GM12878 (cell line): ENCODE measurements at regions of chr2 and their contacts with region 1.

Region 1: GRCh38 chr2:64750817-64751285 is 97.1 kb upstream of the SERTAD2 start:
- DNase-seq: peak; percentile 99
- ATAC-seq: peak; percentile 89
- H3K4me3 ChIP-seq: peak overlapping the region; percentile 98
- H3K27ac ChIP-seq: peak overlapping the region; percentile 92
- H3K4me1 ChIP-seq: 0 out of 2 replicates have a peak, but pooled peaks cover 3% of the 10 kb centered on the region
- H3K27me3 ChIP-seq: no peaks in the 10 kb centered on the region
- CTCF ChIP-seq: no peak; a peak in 2 of 6 replicates
- EP300 ChIP-seq: no peak; a peak in 1 of 4 replicates
- POLR2A ChIP-seq: peak; percentile 92
- RAD21 ChIP-seq: peak; percentile 31; the same call in 1 of the 2 replicates

Region 2: DNA sequence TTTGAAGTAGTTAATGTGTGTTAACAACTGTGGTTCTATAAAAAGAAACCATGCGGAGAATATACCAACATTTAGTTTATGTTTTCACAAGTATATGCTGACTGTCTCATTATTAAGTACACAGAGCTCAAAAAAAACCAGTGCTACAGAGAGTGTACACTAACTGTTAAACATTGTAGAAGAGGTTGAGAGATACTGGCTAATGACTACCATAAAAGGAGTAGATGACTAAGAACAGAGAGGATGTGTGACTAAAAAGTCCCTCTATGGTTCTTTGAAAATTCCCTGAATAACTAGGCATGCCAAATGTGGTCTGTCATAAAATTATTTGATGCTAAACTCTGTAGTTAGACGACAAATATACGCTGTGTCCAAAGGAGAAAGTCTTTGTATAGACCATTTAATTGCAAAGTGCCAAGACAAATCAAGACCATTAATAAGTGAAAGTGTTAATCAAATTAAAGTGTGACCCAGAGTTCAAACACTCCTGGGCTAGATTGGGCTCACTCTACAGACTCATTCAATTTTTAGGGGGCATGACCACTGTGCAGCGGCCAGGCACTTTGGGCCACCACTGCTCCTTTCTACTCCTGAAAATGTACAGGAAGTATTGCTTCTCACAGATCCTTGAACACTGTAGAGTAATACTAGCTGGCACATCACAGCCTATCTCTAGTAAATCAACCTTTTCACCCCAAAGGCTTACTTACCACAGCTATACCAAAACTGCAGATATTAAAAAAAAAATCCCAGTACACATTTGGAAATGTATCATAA is 52.0 kb before region 1 on chr2:
- CTCF ChIA-PET with region 1: interaction called, 4 read pairs
- POLR2A ChIA-PET with region 1: interaction called, 43 read pairs
- RAD21 ChIA-PET with region 1: interaction called, 44 read pairs
- SMC1A ChIA-PET with region 1: interaction called, 38 read pairs
- in situ Hi-C with region 1: no loop called
- intact Hi-C with region 1: loop called (anchors 2 kb)
- DNase-seq: peak; percentile 83
- ATAC-seq: peak; percentile 90
- H3K4me3 ChIP-seq: no peak overlapping the region; the same call in 1 of the 2 replicates
- H3K27ac ChIP-seq: peak overlapping the region; percentile 98
- H3K4me1 ChIP-seq: peaks cover 53% of the 10 kb centered on the region
- H3K27me3 ChIP-seq: no peaks in the 10 kb centered on the region
- CTCF ChIP-seq: no peak
- EP300 ChIP-seq: peak; percentile 41 to 84; a peak in 2 of 4 replicates
- POLR2A ChIP-seq: no peak
- RAD21 ChIP-seq: no peak

Region 3: GRCh38 chr2:64737547-64737946 is 13.3 kb before region 1 on chr2:
- CTCF ChIA-PET with region 1: interaction called, 5 read pairs
- POLR2A ChIA-PET with region 1: interaction called, 115 read pairs
- RAD21 ChIA-PET with region 1: interaction called, 216 read pairs
- SMC1A ChIA-PET with region 1: interaction called, 439 read pairs
- in situ Hi-C with region 1: no loop called
- intact Hi-C with region 1: no loop called
- DNase-seq: peak; percentile 61
- ATAC-seq: peak; percentile 77
- H3K4me3 ChIP-seq: peak overlapping the region; percentile 2; the same call in 1 of the 2 replicates
- H3K27ac ChIP-seq: peak overlapping the region; percentile 62
- H3K4me1 ChIP-seq: peaks cover 26% of the 10 kb centered on the region
- H3K27me3 ChIP-seq: no peaks in the 10 kb centered on the region
- CTCF ChIP-seq: no peak
- EP300 ChIP-seq: peak in 1 of 2 experiments; percentile 16; a peak in 1 of 4 replicates
- POLR2A ChIP-seq: no peak
- RAD21 ChIP-seq: no peak

Region 4: DNA sequence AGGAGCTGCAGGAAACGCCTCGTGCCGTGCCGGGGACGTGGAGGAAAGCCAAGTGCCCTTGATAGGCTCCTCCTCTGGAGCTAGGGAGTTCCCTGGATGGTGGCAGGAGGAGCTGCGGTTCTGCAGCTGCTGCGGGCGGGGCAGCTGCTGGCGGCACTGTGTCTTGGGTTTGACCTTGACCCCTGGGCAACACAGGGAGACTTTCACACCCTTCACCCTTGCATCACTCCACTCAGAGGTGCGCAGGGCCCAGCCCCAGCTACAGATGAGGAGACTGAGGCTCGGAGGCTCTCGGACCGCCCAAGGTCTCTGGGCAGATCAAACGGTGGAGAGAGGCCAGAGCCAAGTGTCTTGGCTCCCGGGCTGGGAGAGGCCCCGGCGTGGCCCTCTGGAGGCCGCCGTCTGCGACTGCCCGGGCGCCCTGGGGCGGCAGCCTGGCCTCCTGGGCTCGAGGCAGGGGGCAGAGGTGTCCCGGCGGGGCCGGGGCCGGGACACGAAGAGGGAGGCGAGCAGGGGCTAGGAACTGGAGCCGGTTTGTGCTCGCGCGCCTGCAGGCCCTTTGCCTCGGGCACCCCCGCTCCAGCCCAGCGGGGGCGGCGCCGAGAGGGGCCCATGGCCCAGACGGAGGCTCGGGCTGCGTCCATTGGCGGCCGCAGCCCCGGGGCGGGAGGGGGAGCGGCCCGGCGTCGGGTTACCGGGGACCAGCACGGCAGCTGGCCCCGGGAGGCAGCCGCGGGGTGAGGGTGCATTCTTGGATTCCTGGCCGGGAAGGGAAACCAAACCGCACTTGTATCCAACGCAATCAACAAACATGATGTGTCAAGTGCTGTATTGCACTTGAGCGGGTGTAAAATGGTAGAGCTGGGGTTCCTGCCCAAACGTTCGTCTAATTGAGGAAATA is 108.7 kb after region 1 on chr2:
- CTCF ChIA-PET with region 1: interaction called, 9 read pairs
- POLR2A ChIA-PET with region 1: interaction called, 5 read pairs
- RAD21 ChIA-PET with region 1: interaction called, 27 read pairs
- SMC1A ChIA-PET with region 1: interaction called, 9 read pairs
- in situ Hi-C with region 1: no loop called
- intact Hi-C with region 1: loop called (anchors 2 kb)
- DNase-seq: no peak
- ATAC-seq: peak; percentile 53
- H3K4me3 ChIP-seq: peak overlapping the region; percentile 65
- H3K27ac ChIP-seq: peak overlapping the region; percentile 91
- H3K4me1 ChIP-seq: peaks cover 54% of the 10 kb centered on the region
- H3K27me3 ChIP-seq: no peaks in the 10 kb centered on the region
- CTCF ChIP-seq: no peak
- EP300 ChIP-seq: no peak
- POLR2A ChIP-seq: peak; percentile 40
- RAD21 ChIP-seq: no peak

Region 5: GRCh38 chr2:64988420-64989125 is 237.7 kb after region 1 on chr2:
- CTCF ChIA-PET with region 1: no interaction called
- POLR2A ChIA-PET with region 1: no interaction called
- RAD21 ChIA-PET with region 1: interaction called, 4 read pairs
- SMC1A ChIA-PET with region 1: no interaction called
- in situ Hi-C with region 1: no loop called
- intact Hi-C with region 1: loop called (anchors 5 kb)
- DNase-seq: no peak
- ATAC-seq: peak; percentile 46
- H3K4me3 ChIP-seq: peak overlapping the region; percentile 99
- H3K27ac ChIP-seq: peak overlapping the region; percentile 89
- H3K4me1 ChIP-seq: peaks cover 28% of the 10 kb centered on the region
- H3K27me3 ChIP-seq: no peaks in the 10 kb centered on the region
- CTCF ChIP-seq: peak; percentile 18 to 33 (median 20); a peak in 3 of 6 replicates
- EP300 ChIP-seq: peak; percentile 53 to 84; a peak in 3 of 4 replicates
- POLR2A ChIP-seq: peak; percentile 59
- RAD21 ChIP-seq: no peak